Psoas muscle (tissue), 8 donors: ENCODE measurements at regions of chr3 and their contacts with region 1.

Region 1: DNA sequence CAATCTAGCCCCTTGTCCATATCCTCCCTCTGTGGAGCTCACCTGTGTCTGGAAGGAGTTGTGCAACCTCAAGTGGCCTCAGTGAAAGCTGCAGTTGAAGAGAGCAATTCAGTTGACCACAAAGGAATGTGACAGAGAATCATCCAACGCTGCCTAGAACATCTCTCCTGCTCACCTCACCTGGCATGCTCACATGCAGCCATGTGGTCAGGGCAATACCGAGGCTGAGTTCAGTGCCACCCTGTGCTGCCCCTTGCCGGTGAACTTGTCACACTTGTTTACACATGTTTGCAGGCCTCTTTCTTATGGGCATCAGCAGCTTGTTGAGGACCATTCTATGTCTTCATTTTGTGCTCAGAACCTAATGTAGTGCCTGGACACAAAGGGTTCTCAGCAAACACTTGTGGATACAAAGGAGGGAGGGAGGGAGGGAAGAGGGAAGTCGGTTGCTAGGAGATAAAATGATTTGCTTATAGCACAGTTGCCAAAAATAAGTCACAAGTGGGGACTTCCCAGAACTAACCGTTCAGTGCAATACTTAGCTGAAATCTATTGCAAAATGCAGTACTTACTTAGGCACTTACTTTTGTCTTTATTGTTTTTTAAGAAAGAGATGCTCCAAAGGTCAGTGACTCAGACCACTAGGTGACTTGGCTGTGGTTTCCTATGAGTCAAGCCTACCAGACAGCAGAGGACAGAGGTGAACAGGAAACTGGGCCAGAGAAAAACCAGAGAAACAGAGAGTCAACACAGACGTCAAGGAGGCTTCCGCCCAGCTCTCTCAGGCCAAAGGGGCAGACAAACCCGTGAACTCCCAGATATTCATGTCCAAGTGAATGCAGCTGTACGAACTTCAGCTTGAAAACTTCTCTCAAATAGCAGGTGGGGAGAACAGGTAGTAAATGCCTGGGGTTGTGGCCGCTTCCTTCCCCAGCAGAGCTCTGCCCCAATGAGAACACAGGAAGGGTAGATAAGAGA is 227.8 kb upstream of the CTNNB1 start:
- DNase-seq: peak; percentile 68 to 70
- ATAC-seq: peak; percentile 65 to 90 (median 86)
- H3K4me3 ChIP-seq: no peak overlapping the region
- H3K27ac ChIP-seq: peak overlapping the region; percentile 56
- H3K4me1 ChIP-seq: no peaks in the 10 kb centered on the region
- H3K27me3 ChIP-seq: no peaks in the 10 kb centered on the region
- CTCF ChIP-seq: no peak

Region 2: DNA sequence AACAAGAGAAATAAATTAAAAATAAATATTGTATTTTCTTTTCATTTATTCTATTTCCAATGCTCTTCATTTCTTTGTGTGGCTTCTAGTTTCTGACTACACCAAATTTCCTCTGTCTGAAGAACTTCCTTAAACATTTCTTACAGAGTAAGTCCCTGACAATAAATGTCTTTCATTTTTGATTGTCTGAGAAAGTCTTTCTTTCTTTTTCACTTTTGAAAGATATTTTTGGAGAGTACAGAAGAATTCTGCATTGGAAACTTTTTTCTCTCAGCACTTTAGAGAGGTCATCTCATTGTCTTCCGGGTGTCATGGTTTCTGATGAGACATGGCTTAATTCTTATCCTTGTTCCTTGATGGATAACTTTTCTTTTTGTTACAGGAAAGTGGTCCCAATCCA is 1384.4 kb before region 1 on chr3:
- intact Hi-C with region 1: loop called in 1 of 2 experiments (anchors 10 kb)
- DNase-seq: no peak
- ATAC-seq: no peak
- H3K4me3 ChIP-seq: no peak overlapping the region
- H3K27ac ChIP-seq: no peak overlapping the region
- H3K4me1 ChIP-seq: no peaks in the 10 kb centered on the region
- H3K27me3 ChIP-seq: no peaks in the 10 kb centered on the region
- CTCF ChIP-seq: no peak

Region 3: GRCh38 chr3:41018855-41019254 is 47.4 kb after region 1 on chr3:
- intact Hi-C with region 1: no loop called
- DNase-seq: no peak
- ATAC-seq: no peak
- H3K4me3 ChIP-seq: no peak overlapping the region
- H3K27ac ChIP-seq: no peak overlapping the region
- H3K4me1 ChIP-seq: no peaks in the 10 kb centered on the region
- H3K27me3 ChIP-seq: no peaks in the 10 kb centered on the region
- CTCF ChIP-seq: no peak